ENCODE measurements at regions of chr4 and their contacts with region 1.

Region 1: DNA sequence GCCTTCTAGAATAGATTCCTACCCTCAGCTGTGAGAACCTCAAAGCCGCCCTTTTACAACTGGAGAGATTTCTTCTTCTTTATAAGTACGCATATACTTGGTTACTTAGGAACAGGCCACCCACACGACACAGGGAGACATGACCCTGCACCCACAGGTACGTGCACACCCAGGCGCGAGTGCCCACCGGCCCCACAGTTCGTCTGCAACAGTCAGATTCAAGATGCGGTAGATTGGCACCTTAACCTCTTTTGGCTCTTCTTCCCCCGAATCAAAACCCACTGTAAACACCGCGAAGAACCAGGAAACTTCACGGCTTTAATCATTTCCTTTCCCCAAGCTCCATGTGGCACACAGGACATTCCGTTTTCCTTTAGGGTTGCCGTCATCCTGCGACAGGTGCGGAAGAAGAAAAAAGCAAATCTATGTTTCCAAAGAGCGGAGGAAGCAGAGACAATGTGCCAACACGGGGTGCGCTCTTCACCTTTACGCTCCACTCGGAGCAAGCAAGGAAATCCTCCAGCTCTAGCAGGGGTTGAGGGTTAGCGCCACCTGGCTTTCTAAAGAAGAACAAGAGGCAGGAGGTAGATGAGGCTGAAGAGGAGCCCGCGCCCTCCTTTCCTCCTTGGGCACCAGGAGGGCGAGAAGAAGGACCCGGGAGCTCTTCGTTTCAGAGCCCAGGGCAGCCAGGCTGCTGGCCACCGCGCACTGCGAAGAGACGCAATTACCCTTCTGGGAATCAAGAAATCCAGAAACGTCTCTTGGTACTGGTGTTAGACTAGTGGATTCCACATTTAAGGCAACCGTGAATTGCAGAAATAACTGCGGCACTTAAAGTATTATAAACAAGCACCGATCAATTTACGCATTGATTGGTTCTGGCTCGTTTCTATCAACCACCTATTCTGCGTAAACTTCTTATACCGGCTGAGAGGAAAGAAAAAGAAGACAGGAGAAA is 35.7 kb downstream of the HAND2 start:
- DNase-seq: peak in 8 of 10 donors; percentile 48 to 72 (median 61)
- H3K4me3 ChIP-seq: peak overlapping the region; percentile 4 to 64 (median 45)
- H3K27ac ChIP-seq: peak overlapping the region in 1 of 59 donors; percentile 3
- H3K27me3 ChIP-seq: peaks cover 0 to 61% (median 40%) of the 10 kb centered on the region in 45 donors
- CTCF ChIP-seq: peak; percentile 32 to 94 (median 77)

Region 2: GRCh38 chr4:172776203-172776861 is 718.0 kb before region 1 on chr4:
- intact Hi-C with region 1: no loop called
- DNase-seq: no peak
- H3K4me3 ChIP-seq: no peak overlapping the region
- H3K27ac ChIP-seq: no peak overlapping the region
- H3K27me3 ChIP-seq: peaks cover 0 to 6% (median 0%) of the 10 kb centered on the region in 45 donors
- CTCF ChIP-seq: no peak

Region 3: GRCh38 chr4:173013232-173013930 is 480.9 kb before region 1 on chr4:
- intact Hi-C with region 1: loop called in 1 of 2 experiments (anchors 10 kb)
- DNase-seq: peak in 2 of 10 donors; percentile 51 to 59
- H3K4me3 ChIP-seq: no peak overlapping the region
- H3K27ac ChIP-seq: peak overlapping the region in 4 of 59 donors; percentile 22 to 75 (median 26)
- H3K27me3 ChIP-seq: no peaks in the 10 kb centered on the region
- CTCF ChIP-seq: peak; percentile 62 to 88 (median 77)

Region 4: GRCh38 chr4:173318648-173319211 is 175.6 kb before region 1 on chr4:
- intact Hi-C with region 1: loop called (anchors 5 kb)
- DNase-seq: no peak
- H3K4me3 ChIP-seq: no peak overlapping the region
- H3K27ac ChIP-seq: peak overlapping the region in 40 of 59 donors; percentile 0 to 72 (median 32)
- H3K27me3 ChIP-seq: no peaks in the 10 kb centered on the region
- CTCF ChIP-seq: peak in 55 of 56 donors; percentile 34 to 88 (median 67)

Region 5: GRCh38 chr4:173334085-173334772 is 160.1 kb before region 1 on chr4 and contains the start of gene HMGB2:
- intact Hi-C with region 1: loop called in 1 of 2 experiments (anchors 5 kb)
- DNase-seq: peak; percentile 99 to 100 (median 100)
- H3K4me3 ChIP-seq: peak within 1 kb of the TSS; percentile 67 to 100 (median 93)
- H3K27ac ChIP-seq: peak within 1 kb of the TSS; percentile 68 to 100 (median 98)
- H3K27me3 ChIP-seq: no peaks in the 10 kb centered on the region
- CTCF ChIP-seq: peak in 9 of 56 donors; percentile 3 to 30 (median 14)
- total RNA-seq, gene HMGB2: 21.0 to 95.1 (median 33.9) TPM

Region 6: GRCh38 chr4:173420324-173420752 is 74.0 kb before region 1 on chr4:
- intact Hi-C with region 1: loop called (anchors 1 to 2 kb)
- DNase-seq: no peak
- H3K4me3 ChIP-seq: peak overlapping the region in 38 of 59 donors; percentile 3 to 65 (median 39)
- H3K27ac ChIP-seq: peak overlapping the region in 20 of 59 donors; percentile 9 to 76 (median 58)
- H3K27me3 ChIP-seq: no peaks in the 10 kb centered on the region
- CTCF ChIP-seq: peak; percentile 21 to 84 (median 66)

Region 7: DNA sequence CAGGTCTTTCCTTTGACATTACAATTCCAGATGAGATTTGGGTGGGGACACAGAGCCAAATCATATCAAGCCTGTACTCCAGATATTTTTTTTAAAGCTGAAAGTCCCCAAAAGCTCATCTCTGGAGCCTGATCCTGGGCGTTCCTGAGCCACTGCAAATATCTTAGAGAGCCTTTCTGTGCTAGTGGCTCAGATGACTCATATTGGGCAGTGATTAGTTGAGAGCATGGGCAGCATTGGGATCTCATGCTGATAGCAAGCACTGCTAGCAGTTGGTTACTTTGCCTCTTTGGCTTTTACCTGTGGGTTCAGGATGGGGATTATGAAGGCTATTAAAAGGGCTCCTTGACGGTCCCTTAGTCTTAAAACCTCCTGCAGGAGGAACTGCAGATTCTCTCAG is 44.0 kb before region 1 on chr4:
- intact Hi-C with region 1: loop called in 1 of 2 experiments (anchors 5 kb)
- DNase-seq: no peak
- H3K4me3 ChIP-seq: no peak overlapping the region
- H3K27ac ChIP-seq: peak overlapping the region in 12 of 59 donors; percentile 6 to 88 (median 78)
- H3K27me3 ChIP-seq: no peaks in the 10 kb centered on the region
- CTCF ChIP-seq: no peak

Region 8: GRCh38 chr4:173609158-173609557 is 114.9 kb after region 1 on chr4:
- intact Hi-C with region 1: no loop called
- DNase-seq: no peak
- H3K4me3 ChIP-seq: no peak overlapping the region
- H3K27ac ChIP-seq: no peak overlapping the region
- H3K27me3 ChIP-seq: peaks cover 0 to 9% (median 0%) of the 10 kb centered on the region in 45 donors
- CTCF ChIP-seq: no peak

Region 9: GRCh38 chr4:174012135-174012885 is 518.0 kb after region 1 on chr4:
- intact Hi-C with region 1: no loop called
- DNase-seq: no peak
- H3K4me3 ChIP-seq: no peak overlapping the region
- H3K27ac ChIP-seq: no peak overlapping the region
- H3K27me3 ChIP-seq: peaks cover 0 to 14% (median 0%) of the 10 kb centered on the region in 45 donors
- CTCF ChIP-seq: no peak

Measured in dorsolateral prefrontal cortex (tissue), 120 donors.